PC-9 (cell line): ENCODE measurements at regions of chr1 and their contacts with region 1.

Region 1: DNA sequence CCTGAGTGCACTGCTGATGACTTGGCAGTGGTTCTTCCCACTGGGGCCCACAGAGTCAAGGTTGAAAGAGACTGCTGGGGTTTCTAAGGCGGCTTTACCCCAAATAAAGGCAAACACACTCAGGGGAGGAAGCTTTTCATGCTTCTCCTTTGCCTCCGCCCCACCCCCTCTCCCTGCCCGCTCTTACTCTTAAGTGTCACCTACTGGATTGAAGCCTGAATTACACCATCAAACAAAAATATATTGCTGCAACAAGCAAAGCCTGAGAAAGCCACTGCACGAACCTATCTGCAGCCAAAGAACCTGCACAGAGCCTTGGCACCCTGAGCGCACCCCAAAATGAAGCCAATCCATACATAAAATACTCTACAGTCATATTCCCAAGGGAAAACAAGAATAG is 63.1 kb downstream of the PTGFR start:
- DNase-seq: no peak
- H3K4me3 ChIP-seq: no peak overlapping the region
- H3K27ac ChIP-seq: no peak overlapping the region
- H3K4me1 ChIP-seq: no peaks in the 10 kb centered on the region
- H3K27me3 ChIP-seq: no peaks in the 10 kb centered on the region
- CTCF ChIP-seq: peak; percentile 54; the same call in 1 of the 2 replicates

Region 2: DNA sequence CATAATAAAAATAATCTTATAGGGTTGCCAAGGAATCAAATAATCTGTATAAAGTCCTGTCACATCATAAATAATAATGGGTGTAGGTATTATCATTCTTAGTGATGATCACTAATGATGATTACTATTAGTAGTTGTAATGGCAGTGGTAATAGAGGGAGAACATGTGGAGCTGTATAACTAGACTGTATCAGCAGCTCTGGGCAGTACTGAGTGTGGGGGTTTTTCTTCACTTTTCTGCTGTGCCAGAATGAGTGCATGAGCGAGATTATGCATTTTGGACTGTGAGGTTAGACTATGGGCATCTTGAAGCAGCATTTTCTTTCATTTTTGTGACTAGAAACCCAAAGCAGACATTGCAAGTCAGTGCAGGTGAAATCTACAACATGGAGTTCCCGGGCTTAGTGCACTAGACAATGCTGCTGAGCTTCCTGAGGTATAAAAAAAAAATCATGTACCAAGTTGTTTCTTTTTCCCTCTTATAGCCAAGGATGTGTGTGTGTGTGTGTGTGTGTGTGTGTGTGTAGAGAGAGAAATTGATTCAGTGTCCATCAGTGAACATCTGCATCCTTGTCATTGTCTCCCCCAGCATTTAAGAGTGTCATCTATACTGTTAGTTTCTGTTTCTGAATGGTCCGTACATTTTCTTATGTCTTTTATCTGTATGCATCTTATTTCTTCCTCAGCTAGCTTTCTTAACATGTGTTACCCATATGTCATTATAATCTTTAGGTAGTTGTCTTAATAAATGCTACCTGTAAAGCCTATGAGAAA is 421.5 kb before region 1 on chr1:
- CTCF ChIA-PET with region 1: no interaction called
- POLR2A ChIA-PET with region 1: no interaction called
- intact Hi-C with region 1: loop called (anchors 5 kb)
- DNase-seq: no peak
- H3K4me3 ChIP-seq: no peak overlapping the region
- H3K27ac ChIP-seq: no peak overlapping the region
- H3K4me1 ChIP-seq: no peaks in the 10 kb centered on the region
- H3K27me3 ChIP-seq: no peaks in the 10 kb centered on the region
- CTCF ChIP-seq: no peak

Region 3: GRCh38 chr1:79255410-79255809 is 701.6 kb after region 1 on chr1:
- CTCF ChIA-PET with region 1: no interaction called
- POLR2A ChIA-PET with region 1: no interaction called
- intact Hi-C with region 1: no loop called
- DNase-seq: no peak
- H3K4me3 ChIP-seq: no peak overlapping the region
- H3K27ac ChIP-seq: no peak overlapping the region
- H3K4me1 ChIP-seq: no peaks in the 10 kb centered on the region
- H3K27me3 ChIP-seq: no peaks in the 10 kb centered on the region
- CTCF ChIP-seq: no peak